ENCODE measurements at regions of chr2 and their contacts with region 1.

Region 1: GRCh38 chr2:230602562-230603230 is 109.9 kb upstream of the CAB39 start:
- DNase-seq: peak; percentile 75
- H3K4me3 Mint-ChIP-seq: peak overlapping the region; percentile 31
- H3K27ac Mint-ChIP-seq: peak overlapping the region; percentile 89
- H3K4me1 Mint-ChIP-seq: peaks cover 56% of the 10 kb centered on the region
- H3K27me3 Mint-ChIP-seq: no peaks in the 10 kb centered on the region

Region 2: DNA sequence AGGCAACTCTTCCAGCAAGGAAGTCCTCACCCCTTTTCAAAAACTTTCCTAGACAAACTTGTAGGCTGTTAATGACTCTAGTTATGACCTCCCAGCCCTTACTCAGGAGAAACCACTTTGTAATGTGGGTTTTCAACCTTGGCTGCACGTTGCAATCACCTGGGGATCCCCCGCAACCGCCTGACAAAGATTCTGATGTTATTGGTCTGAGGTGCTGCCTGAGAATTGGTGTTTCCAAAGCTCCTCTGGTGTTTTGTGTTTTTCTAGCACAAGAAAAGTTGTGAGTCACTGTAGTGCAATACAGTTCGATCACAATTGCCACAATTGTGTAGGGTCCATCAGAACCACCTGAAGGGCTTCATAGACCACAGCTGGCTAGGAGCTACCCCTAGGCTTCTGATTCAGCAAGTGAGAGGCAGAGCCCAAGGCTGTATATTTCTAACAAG is 65.1 kb before region 1 on chr2:
- CTCF ChIA-PET with region 1: no interaction called
- POLR2A ChIA-PET with region 1: no interaction called
- intact Hi-C with region 1: loop called (anchors 5 kb)
- DNase-seq: peak; percentile 72
- H3K4me3 Mint-ChIP-seq: no peak overlapping the region
- H3K27ac Mint-ChIP-seq: peak overlapping the region; percentile 20
- H3K4me1 Mint-ChIP-seq: peaks cover 25% of the 10 kb centered on the region
- H3K27me3 Mint-ChIP-seq: no peaks in the 10 kb centered on the region